ENCODE measurements at regions of chr1 and their contacts with region 1.

Region 1: GRCh38 chr1:32240140-32240951 is 6.7 kb upstream of the FAM167B start:
- DNase-seq: no peak
- H3K4me3 ChIP-seq: peak overlapping the region; percentile 77 to 80
- H3K27ac ChIP-seq: peak overlapping the region; percentile 89
- H3K4me1 ChIP-seq: peaks cover 39% of the 10 kb centered on the region
- H3K27me3 ChIP-seq: no peaks in the 10 kb centered on the region
- CTCF ChIP-seq: peak in 1 of 3 experiments; percentile 23
- POLR2A ChIP-seq: peak in 1 of 2 donors; percentile 68

Region 2: GRCh38 chr1:32200226-32201010 is 39.9 kb before region 1 on chr1 and contains the start of gene CCDC28B:
- intact Hi-C with region 1: loop called (anchors 2 kb)
- DNase-seq: no peak
- H3K4me3 ChIP-seq: peak within 1 kb of the TSS; percentile 49 to 77
- H3K27ac ChIP-seq: peak within 1 kb of the TSS; percentile 77
- H3K4me1 ChIP-seq: peaks cover 28% of the 10 kb centered on the region
- H3K27me3 ChIP-seq: no peaks in the 10 kb centered on the region
- CTCF ChIP-seq: no peak
- POLR2A ChIP-seq: no peak
- total RNA-seq, gene CCDC28B: 2.9 TPM

Measured in vagina (tissue), 2 donors.